ENCODE measurements at regions of chr11 and their contacts with region 1.

Region 1: GRCh38 chr11:117932067-117932370 is 2.8 kb upstream of the TMPRSS13 start:
- DNase-seq: no peak
- ATAC-seq: no peak
- H3K4me3 Mint-ChIP-seq: no peak overlapping the region
- H3K27ac Mint-ChIP-seq: no peak overlapping the region
- H3K4me1 Mint-ChIP-seq: peaks cover 40% of the 10 kb centered on the region
- H3K27me3 Mint-ChIP-seq: peaks cover 4% of the 10 kb centered on the region
- CTCF ChIP-seq: no peak

Region 2: DNA sequence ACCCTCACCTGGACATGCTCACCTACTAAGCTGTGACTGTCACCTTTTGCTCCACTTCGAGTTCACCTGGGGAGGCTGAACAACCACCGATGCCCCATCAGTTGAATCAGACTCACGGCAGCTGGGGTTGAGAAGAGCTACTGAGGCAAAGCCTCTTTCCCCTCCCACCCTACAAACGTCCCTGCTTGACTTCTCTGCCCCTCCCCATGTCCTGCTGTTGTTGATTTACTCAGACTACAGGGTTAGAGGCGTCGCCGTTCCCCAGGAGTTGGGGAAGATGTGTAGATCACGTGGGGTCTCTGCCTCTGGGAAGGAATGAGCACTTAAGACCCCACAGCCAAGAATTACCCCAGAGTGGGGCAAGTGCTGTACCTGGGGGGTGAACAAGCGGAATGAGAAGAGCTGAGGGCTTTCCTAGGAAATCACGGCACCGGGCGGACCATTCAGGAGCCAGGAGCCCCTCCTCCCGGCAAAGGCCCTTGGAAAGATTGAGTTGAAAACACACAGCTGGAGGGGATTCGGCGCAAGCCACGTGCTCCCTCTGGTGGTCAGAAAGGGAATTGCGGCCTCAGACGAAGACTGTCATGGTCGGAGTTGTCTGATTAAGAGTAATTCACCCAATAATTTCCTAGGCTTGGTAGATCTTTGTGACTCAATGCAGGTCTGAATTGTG is 114.5 kb before region 1 on chr11:
- CTCF ChIA-PET with region 1: interaction called, 11 read pairs
- POLR2A ChIA-PET with region 1: no interaction called
- DNase-seq: peak; percentile 89
- ATAC-seq: peak; percentile 33
- H3K4me3 Mint-ChIP-seq: peak overlapping the region; percentile 48
- H3K27ac Mint-ChIP-seq: no peak overlapping the region
- H3K4me1 Mint-ChIP-seq: peaks cover 56% of the 10 kb centered on the region
- H3K27me3 Mint-ChIP-seq: peaks cover 5% of the 10 kb centered on the region; the same call in 1 of the 2 replicates
- CTCF ChIP-seq: peak; percentile 99

Region 3: GRCh38 chr11:117898059-117898458 is 34.0 kb before region 1 on chr11:
- CTCF ChIA-PET with region 1: no interaction called
- POLR2A ChIA-PET with region 1: no interaction called
- DNase-seq: no peak
- ATAC-seq: no peak
- H3K4me3 Mint-ChIP-seq: no peak overlapping the region
- H3K27ac Mint-ChIP-seq: no peak overlapping the region
- H3K4me1 Mint-ChIP-seq: no peaks in the 10 kb centered on the region
- H3K27me3 Mint-ChIP-seq: no peaks in the 10 kb centered on the region
- CTCF ChIP-seq: no peak

Region 4: DNA sequence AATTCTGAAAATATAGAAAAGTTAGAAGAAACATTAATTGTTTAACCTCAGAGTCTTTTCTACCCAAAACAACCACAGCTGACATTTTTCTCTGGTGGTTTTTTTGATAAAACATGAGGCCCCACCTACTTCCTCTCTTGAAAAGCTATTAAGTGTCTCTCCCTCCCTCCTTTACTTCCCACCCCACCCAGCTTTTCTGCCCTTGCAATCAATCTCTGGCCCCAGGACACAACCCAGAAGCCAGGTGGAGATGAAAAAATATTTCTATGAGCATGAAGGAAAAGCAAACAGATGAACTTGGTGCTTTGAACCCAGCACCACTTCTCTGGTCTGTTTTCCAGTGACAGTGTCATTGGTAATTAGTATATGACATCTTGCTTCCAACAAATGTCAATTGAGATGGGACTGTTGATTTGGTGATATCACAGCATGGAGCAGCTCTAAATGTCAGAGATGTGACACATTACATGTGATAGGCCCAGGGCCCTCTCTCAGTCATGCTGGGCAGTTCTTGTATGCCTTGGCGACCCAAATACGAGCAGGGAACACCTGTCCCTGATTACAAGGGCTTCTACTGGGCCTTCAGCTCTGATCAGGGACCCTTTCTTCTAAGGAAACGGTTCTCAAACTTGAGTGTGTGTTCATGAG is 21.1 kb after region 1 on chr11:
- CTCF ChIA-PET with region 1: no interaction called
- POLR2A ChIA-PET with region 1: no interaction called
- DNase-seq: no peak
- ATAC-seq: no peak
- H3K4me3 Mint-ChIP-seq: no peak overlapping the region
- H3K27ac Mint-ChIP-seq: no peak overlapping the region
- H3K4me1 Mint-ChIP-seq: no peaks in the 10 kb centered on the region
- H3K27me3 Mint-ChIP-seq: peaks cover 4% of the 10 kb centered on the region; the same call in 1 of the 2 replicates
- CTCF ChIP-seq: no peak